A673 (cell line): ENCODE measurements at regions of chr1 and their contacts with region 1.

Region 1: GRCh38 chr1:61406467-61406866 is 318.5 kb downstream of the TM2D1 start:
- DNase-seq: no peak
- H3K4me3 ChIP-seq: no peak overlapping the region
- H3K27ac ChIP-seq: no peak overlapping the region
- H3K4me1 ChIP-seq: peaks cover 5% of the 10 kb centered on the region
- H3K27me3 ChIP-seq: no peaks in the 10 kb centered on the region
- CTCF ChIP-seq: no peak

Region 2: GRCh38 chr1:60960891-60961461 is 445.5 kb before region 1 on chr1:
- CTCF ChIA-PET with region 1: no interaction called
- POLR2A ChIA-PET with region 1: interaction called, 15 read pairs
- intact Hi-C with region 1: no loop called
- DNase-seq: no peak
- H3K4me3 ChIP-seq: no peak overlapping the region
- H3K27ac ChIP-seq: no peak overlapping the region
- H3K4me1 ChIP-seq: no peaks in the 10 kb centered on the region
- H3K27me3 ChIP-seq: no peaks in the 10 kb centered on the region
- CTCF ChIP-seq: no peak

Region 3: GRCh38 chr1:61210435-61211154 is 195.9 kb before region 1 on chr1:
- CTCF ChIA-PET with region 1: no interaction called
- POLR2A ChIA-PET with region 1: no interaction called
- intact Hi-C with region 1: no loop called
- DNase-seq: no peak
- H3K4me3 ChIP-seq: no peak overlapping the region
- H3K27ac ChIP-seq: no peak overlapping the region
- H3K4me1 ChIP-seq: peaks cover 19% of the 10 kb centered on the region
- H3K27me3 ChIP-seq: no peaks in the 10 kb centered on the region
- CTCF ChIP-seq: peak; percentile 37

Region 4: DNA sequence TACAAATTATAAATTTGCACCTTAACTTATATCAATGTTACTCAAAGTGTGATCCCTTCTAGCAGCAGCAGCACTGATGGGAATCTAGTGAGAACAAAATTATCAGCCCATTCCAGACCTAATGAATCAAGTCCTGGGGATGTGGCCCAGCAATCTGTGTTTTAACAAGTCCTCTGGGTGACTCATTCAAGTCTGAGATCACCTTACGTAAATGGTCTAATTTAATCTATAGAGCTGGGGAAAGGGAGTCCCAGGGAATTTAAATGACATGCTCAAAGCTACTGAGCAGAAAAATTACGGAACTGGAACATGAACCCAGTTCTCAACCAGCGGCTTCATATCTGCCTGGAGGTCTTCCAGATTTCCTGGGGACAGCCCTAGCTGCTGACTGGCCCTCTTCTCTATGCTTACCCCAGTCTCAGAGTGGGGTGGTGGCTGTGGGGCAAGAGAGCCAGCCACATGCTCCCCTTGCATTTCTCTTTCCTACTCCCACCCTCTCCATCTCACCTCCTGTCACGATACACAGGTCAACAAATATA is 98.5 kb after region 1 on chr1:
- CTCF ChIA-PET with region 1: no interaction called
- POLR2A ChIA-PET with region 1: no interaction called
- intact Hi-C with region 1: no loop called
- DNase-seq: peak; percentile 44
- H3K4me3 ChIP-seq: no peak overlapping the region
- H3K27ac ChIP-seq: no peak overlapping the region
- H3K4me1 ChIP-seq: peaks cover 3% of the 10 kb centered on the region
- H3K27me3 ChIP-seq: no peaks in the 10 kb centered on the region
- CTCF ChIP-seq: no peak

Region 5: DNA sequence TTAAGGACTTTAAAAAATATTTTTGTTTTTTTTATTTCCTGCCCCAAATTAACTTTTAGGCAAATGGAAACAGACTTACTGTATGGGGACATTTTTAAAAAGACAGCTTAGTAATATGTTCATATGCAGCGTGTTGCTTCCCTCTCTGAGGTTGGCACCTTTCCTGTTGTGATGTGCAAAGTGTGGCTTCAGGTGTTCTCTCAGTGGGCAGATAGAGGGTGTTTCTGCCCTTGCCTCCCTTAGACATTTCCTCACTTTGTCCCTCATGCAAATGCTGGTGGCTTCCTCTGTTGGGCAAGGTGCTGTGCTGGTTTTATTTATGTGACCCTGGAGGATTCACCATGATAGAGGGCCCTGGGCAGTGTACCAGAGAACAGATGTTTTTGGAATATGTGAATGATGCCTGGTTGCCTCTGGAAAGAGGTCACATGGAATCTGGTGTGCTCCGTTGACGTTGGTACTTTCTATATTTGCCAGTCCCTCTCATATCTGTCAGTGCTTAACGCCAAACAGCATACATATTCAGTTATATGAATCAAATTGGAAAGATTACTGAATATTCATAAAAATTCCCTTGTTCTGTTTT is 459.3 kb after region 1 on chr1:
- CTCF ChIA-PET with region 1: no interaction called
- POLR2A ChIA-PET with region 1: no interaction called
- intact Hi-C with region 1: no loop called
- DNase-seq: no peak
- H3K4me3 ChIP-seq: no peak overlapping the region
- H3K27ac ChIP-seq: no peak overlapping the region
- H3K4me1 ChIP-seq: no peaks in the 10 kb centered on the region
- H3K27me3 ChIP-seq: no peaks in the 10 kb centered on the region
- CTCF ChIP-seq: no peak